ENCODE measurements at regions of chr1 and their contacts with region 1.

Region 1: GRCh38 chr1:110249256-110249655 is 39.1 kb downstream of the KCNC4 start:
- DNase-seq: no peak
- ATAC-seq: no peak
- H3K4me3 ChIP-seq: no peak overlapping the region
- H3K4me3 Mint-ChIP-seq: no peak overlapping the region
- H3K27ac ChIP-seq: no peak overlapping the region
- H3K27ac Mint-ChIP-seq: no peak overlapping the region
- H3K4me1 ChIP-seq: no peaks in the 10 kb centered on the region
- H3K4me1 Mint-ChIP-seq: peaks cover 0 to 3% (median 0%) of the 10 kb centered on the region in 3 donors
- H3K27me3 ChIP-seq: peaks cover 0 to 11% of the 10 kb centered on the region in 2 experiments
- H3K27me3 Mint-ChIP-seq: no peaks in the 10 kb centered on the region

Region 2: GRCh38 chr1:110089561-110090210 is 159.6 kb before region 1 on chr1:
- CTCF ChIA-PET with region 1: no interaction called
- POLR2A ChIA-PET with region 1: no interaction called
- DNase-seq: no peak
- ATAC-seq: no peak
- H3K4me3 ChIP-seq: no peak overlapping the region
- H3K4me3 Mint-ChIP-seq: no peak overlapping the region
- H3K27ac ChIP-seq: no peak overlapping the region
- H3K27ac Mint-ChIP-seq: no peak overlapping the region
- H3K4me1 ChIP-seq: peaks cover 0 to under 1% of the 10 kb centered on the region in 2 experiments
- H3K4me1 Mint-ChIP-seq: peaks cover 0 to 5% (median 4%) of the 10 kb centered on the region in 3 donors
- H3K27me3 ChIP-seq: peaks cover 10 to 48% of the 10 kb centered on the region in 2 experiments
- H3K27me3 Mint-ChIP-seq: peaks cover 46 to 52% of the 10 kb centered on the region in 2 donors

Region 3: DNA sequence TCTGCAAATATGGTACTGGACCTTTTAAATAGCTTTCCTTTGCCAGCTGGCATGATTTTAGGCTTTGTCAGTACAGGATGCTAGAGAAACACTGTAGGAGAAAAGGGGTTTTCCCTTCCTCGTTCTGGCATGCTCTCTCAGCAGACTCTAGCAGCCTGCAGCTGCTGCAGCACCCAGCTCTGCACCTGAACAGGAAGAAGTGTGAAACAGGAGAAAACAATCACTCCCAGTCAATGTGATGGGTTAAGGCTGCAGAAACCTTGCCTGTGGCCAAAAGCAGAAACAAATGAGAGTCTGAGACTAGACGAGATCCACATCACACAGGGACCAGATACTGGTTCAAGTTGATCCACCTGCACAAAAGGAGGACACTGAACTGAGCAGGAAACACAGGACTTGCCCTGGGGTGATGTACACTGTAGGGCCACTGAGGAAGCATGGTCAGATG is 1157.1 kb after region 1 on chr1:
- CTCF ChIA-PET with region 1: no interaction called
- POLR2A ChIA-PET with region 1: interaction called in 1 of 2 experiments, 10 read pairs
- DNase-seq: peak; percentile 21 to 78 (median 45)
- ATAC-seq: peak; percentile 98 to 100 (median 100)
- H3K4me3 ChIP-seq: peak overlapping the region in 1 of 2 donors; percentile 25
- H3K4me3 Mint-ChIP-seq: peak overlapping the region; percentile 25 to 64 (median 26)
- H3K27ac ChIP-seq: peak overlapping the region; percentile 19
- H3K27ac Mint-ChIP-seq: peak overlapping the region; percentile 86 to 91
- H3K4me1 ChIP-seq: peaks cover 11 to 28% of the 10 kb centered on the region in 2 experiments
- H3K4me1 Mint-ChIP-seq: peaks cover 38 to 61% (median 41%) of the 10 kb centered on the region in 3 donors
- H3K27me3 ChIP-seq: no peaks in the 10 kb centered on the region
- H3K27me3 Mint-ChIP-seq: no peaks in the 10 kb centered on the region

Measured in T-cell (primary cell).